A673 (cell line): ENCODE measurements at regions of chr11 and their contacts with region 1.

Region 1: DNA sequence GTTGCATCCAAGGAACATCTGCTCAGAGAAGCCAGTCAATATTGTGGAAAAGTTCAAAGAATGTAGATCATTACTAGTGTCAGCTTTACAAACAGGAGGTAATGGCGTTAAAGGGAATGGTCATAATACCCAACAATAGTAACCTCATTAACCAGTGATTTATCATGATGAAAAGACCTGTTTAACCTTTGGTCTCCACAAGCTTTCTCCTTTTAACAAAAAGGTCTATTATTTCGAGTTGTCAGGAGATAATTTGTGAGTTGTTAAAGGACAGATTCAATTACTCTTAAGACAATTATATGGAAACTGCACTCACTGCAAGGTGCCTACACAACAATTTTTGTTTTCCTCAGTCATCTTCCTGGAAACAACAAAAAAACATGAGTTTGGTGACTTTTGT is 73.8 kb upstream of the HTATIP2 start:
- DNase-seq: no peak
- H3K4me3 ChIP-seq: no peak overlapping the region
- H3K27ac ChIP-seq: no peak overlapping the region
- H3K4me1 ChIP-seq: no peaks in the 10 kb centered on the region
- H3K27me3 ChIP-seq: peaks cover 17% of the 10 kb centered on the region
- CTCF ChIP-seq: no peak

Region 2: GRCh38 chr11:20407344-20407743 is 117.6 kb after region 1 on chr11:
- CTCF ChIA-PET with region 1: no interaction called
- POLR2A ChIA-PET with region 1: interaction called, 12 read pairs
- intact Hi-C with region 1: no loop called
- DNase-seq: no peak
- H3K4me3 ChIP-seq: no peak overlapping the region
- H3K27ac ChIP-seq: no peak overlapping the region
- H3K4me1 ChIP-seq: no peaks in the 10 kb centered on the region
- H3K27me3 ChIP-seq: no peaks in the 10 kb centered on the region
- CTCF ChIP-seq: no peak